Mammary epithelial cell (primary cell): ENCODE measurements at regions of chr10 and their contacts with region 1.

Region 1: DNA sequence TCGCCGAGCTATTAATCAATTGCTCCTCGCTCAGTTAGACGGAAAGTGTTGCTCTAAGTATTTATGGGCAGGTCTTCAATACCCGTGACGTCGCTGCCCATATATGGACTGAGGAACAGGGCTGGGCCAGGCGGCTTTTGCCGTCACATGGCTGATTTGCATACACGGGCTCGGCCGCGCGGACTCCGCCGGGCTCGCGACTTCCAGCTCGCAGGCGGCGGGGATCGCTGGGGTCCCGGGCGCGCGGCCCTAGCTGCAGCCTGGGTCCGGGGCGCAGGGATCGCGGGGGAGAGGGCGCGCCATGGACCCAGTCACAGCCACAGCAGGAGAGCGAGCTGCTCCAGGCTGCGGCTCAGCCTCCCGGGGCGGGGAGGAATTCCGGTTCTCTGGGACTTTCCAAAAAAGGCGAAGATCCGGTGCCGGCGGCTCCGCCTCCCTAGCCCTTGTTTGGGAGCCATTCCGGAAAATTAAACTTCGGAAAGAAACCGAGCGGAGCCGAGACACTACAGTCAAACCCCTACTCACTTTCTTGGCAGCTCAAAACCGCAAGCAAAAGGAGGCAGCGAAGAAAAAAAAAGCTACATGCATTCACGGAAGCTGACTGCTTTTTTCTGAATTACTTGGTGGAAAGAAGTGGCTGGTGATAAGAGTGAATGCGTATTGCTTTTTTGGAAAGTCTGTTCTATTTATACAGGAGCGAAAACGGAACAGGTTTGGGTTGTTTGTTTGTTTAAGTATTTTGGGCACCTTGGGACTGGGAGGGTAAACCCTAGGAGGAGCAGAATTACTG is at the start of gene EGR2:
- DNase-seq: peak; percentile 93
- H3K4me3 ChIP-seq: peak within 1 kb of the TSS; percentile 63 to 73 (median 66)
- H3K27ac ChIP-seq: peak within 1 kb of the TSS; percentile 70
- H3K4me1 ChIP-seq: peaks cover 35% of the 10 kb centered on the region
- H3K27me3 ChIP-seq: peaks cover 8% of the 10 kb centered on the region
- CTCF ChIP-seq: no peak
- total RNA-seq, gene EGR2: 0.64 to 1.2 TPM

Region 2: GRCh38 chr10:62244780-62245467 is 571.6 kb before region 1 on chr10:
- CTCF ChIA-PET with region 1: no interaction called
- dilution Hi-C with region 1: no loop called
- in situ Hi-C with region 1: no loop called
- intact Hi-C with region 1: loop called (anchors 5 kb)
- DNase-seq: peak; percentile 70
- H3K4me3 ChIP-seq: peak overlapping the region in 2 of 3 experiments; percentile 14 to 69
- H3K27ac ChIP-seq: peak overlapping the region; percentile 84
- H3K4me1 ChIP-seq: peaks cover 18% of the 10 kb centered on the region
- H3K27me3 ChIP-seq: no peaks in the 10 kb centered on the region
- CTCF ChIP-seq: peak; percentile 85 to 96

Region 3: DNA sequence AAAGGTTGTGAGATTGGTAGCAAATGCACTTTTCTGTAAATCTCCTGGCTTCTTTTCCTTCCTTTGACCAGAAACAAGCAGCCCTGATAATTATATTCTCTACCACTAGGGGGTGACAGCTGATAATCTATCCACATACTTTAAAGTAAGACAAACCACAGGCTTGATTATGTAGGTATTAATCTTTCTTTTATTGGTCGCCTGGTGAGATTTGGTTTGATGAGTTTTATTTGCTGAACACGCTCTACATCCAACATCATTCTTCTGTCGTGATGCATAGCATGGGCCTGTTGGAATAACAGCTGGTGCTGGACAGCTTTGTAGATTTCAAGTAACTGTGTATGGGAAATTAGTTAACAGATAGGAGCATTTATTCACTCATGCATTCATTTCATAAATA is 378.8 kb before region 1 on chr10:
- CTCF ChIA-PET with region 1: interaction called, 5 read pairs
- dilution Hi-C with region 1: no loop called
- in situ Hi-C with region 1: loop called in 1 of 2 experiments (anchors 25 kb)
- intact Hi-C with region 1: loop called (anchors 5 kb)
- DNase-seq: peak; percentile 79
- H3K4me3 ChIP-seq: no peak overlapping the region
- H3K27ac ChIP-seq: no peak overlapping the region
- H3K4me1 ChIP-seq: peaks cover 21% of the 10 kb centered on the region
- H3K27me3 ChIP-seq: no peaks in the 10 kb centered on the region
- CTCF ChIP-seq: peak; percentile 70 to 71

Region 4: GRCh38 chr10:62610649-62611229 is 205.8 kb before region 1 on chr10:
- CTCF ChIA-PET with region 1: interaction called, 12 read pairs
- dilution Hi-C with region 1: no loop called
- in situ Hi-C with region 1: loop called in 1 of 2 experiments (anchors 5 kb)
- intact Hi-C with region 1: loop called (anchors 1 kb)
- DNase-seq: peak; percentile 49
- H3K4me3 ChIP-seq: no peak overlapping the region
- H3K27ac ChIP-seq: no peak overlapping the region
- H3K4me1 ChIP-seq: peaks cover 7% of the 10 kb centered on the region
- H3K27me3 ChIP-seq: no peaks in the 10 kb centered on the region
- CTCF ChIP-seq: peak; percentile 88 to 96

Region 5: GRCh38 chr10:62851442-62851841 is 34.9 kb after region 1 on chr10:
- CTCF ChIA-PET with region 1: no interaction called
- dilution Hi-C with region 1: no loop called
- in situ Hi-C with region 1: no loop called
- intact Hi-C with region 1: no loop called
- DNase-seq: no peak
- H3K4me3 ChIP-seq: no peak overlapping the region
- H3K27ac ChIP-seq: no peak overlapping the region
- H3K4me1 ChIP-seq: no peaks in the 10 kb centered on the region
- H3K27me3 ChIP-seq: no peaks in the 10 kb centered on the region
- CTCF ChIP-seq: peak; percentile 52 to 61

Region 6: DNA sequence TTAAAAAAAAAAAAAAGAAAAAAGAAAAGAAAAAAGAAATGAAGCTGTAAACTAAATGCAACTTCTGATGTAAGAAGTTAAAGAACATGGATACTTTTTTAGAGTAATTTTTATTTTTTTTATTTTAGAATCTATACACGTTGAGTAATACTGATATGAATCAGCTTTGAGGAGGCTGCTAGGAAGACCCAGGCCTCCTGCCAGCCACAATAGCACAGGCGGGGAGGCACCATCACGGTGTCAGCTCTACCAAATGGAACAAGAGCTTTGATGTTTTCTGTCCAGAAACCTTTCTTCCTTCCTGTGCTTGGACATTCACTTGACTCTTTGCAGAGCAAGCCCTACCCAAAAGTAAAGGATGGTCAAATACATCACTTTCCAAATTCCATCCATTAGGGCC is 45.0 kb after region 1 on chr10:
- CTCF ChIA-PET with region 1: no interaction called
- dilution Hi-C with region 1: no loop called
- in situ Hi-C with region 1: no loop called
- intact Hi-C with region 1: no loop called
- DNase-seq: no peak
- H3K4me3 ChIP-seq: no peak overlapping the region
- H3K27ac ChIP-seq: no peak overlapping the region
- H3K4me1 ChIP-seq: peaks cover 4% of the 10 kb centered on the region
- H3K27me3 ChIP-seq: no peaks in the 10 kb centered on the region
- CTCF ChIP-seq: no peak

Region 7: GRCh38 chr10:63003816-63004453 is 187.4 kb after region 1 on chr10:
- CTCF ChIA-PET with region 1: interaction called, 14 read pairs
- dilution Hi-C with region 1: no loop called
- in situ Hi-C with region 1: no loop called
- intact Hi-C with region 1: no loop called
- DNase-seq: no peak
- H3K4me3 ChIP-seq: no peak overlapping the region
- H3K27ac ChIP-seq: no peak overlapping the region
- H3K4me1 ChIP-seq: peaks cover 14% of the 10 kb centered on the region
- H3K27me3 ChIP-seq: no peaks in the 10 kb centered on the region
- CTCF ChIP-seq: peak; percentile 30 to 40

Region 8: DNA sequence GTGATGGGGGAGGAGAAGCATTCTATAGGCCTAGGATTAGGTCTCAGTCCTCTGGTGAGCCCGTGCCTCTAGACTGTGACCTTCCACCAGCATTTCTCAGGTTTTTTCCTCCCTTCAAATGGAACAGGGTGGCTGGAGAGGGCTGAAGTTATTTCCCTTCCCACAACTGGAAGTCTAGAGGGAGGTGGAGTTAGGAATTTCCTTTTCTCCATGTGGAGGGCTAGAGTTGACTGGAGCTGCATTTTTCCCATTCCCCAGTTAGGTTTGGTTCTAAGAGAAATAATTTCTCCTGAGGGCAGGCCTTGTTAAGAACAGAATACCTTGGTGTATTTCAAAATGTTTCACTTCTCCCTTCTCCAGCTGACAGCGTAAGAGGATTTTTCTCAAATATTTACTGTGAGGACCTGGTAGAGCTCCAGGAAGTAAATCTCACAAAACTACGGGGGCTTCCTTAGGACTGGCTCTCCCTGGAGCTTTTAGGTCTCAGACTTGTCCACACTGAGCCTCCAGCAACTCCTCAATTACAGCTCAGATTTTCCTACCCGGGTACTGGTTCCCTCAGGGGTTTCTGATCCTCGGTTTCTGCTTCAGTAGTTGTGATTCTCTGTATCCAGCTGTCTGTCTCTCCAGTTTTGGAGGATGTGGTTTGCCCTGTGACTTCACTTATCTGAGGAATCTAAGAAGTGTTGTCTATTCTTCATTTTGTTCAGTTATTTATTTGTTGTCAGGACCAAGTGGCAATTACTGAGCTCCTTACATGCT is 698.7 kb after region 1 on chr10:
- CTCF ChIA-PET with region 1: interaction called, 18 read pairs
- dilution Hi-C with region 1: no loop called
- in situ Hi-C with region 1: no loop called
- intact Hi-C with region 1: no loop called
- DNase-seq: peak; percentile 74
- H3K4me3 ChIP-seq: peak overlapping the region; percentile 3 to 35 (median 33)
- H3K27ac ChIP-seq: peak overlapping the region; percentile 94
- H3K4me1 ChIP-seq: peaks cover 36% of the 10 kb centered on the region
- H3K27me3 ChIP-seq: no peaks in the 10 kb centered on the region
- CTCF ChIP-seq: no peak